Prostate gland (tissue), 2 donors: ENCODE measurements at regions of chr11 and their contacts with region 1.

Region 1: GRCh38 chr11:122215244-122215992 is 99.4 kb upstream of the BLID start:
- DNase-seq: peak; percentile 40
- H3K4me3 ChIP-seq: no peak overlapping the region
- H3K27ac ChIP-seq: peak overlapping the region in 1 of 2 donors; percentile 34
- H3K4me1 ChIP-seq: no peaks in the 10 kb centered on the region
- H3K27me3 ChIP-seq: no peaks in the 10 kb centered on the region
- CTCF ChIP-seq: peak; percentile 45 to 81 (median 73)
- POLR2A ChIP-seq: no peak

Region 2: DNA sequence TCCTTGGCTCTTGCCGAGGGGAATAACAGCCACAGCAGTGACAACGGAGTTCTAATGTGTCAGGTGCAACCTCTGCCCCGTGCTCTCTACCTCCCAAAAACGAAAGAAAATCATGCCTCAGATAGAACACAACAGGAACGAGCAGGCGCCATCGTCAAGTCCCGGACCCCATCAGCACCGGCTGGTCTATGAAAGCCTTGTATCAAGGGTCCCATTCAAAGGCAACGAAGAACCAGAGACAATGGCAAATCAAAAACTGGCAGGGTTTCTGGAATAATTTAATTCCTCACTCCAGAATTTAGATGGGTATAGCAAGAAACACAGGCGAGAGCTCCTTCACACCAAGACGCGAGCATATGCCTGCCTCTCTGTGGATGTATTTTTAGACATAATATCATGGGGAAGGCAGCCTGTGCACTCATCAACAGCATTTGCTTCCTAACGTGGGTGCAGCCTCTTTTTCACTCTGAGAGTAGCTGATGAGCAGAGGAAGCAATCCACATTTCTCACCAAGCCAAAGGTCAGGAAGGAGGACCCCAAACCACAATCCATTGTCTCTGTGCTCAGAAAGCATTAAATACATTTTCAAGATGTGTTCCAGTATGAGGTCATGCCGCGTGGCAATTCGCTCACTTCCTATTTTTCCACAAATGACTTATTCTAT is 94.0 kb after region 1 on chr11:
- intact Hi-C with region 1: loop called (anchors 10 kb)
- DNase-seq: no peak
- H3K4me3 ChIP-seq: peak overlapping the region in 1 of 2 donors; percentile 6
- H3K27ac ChIP-seq: peak overlapping the region; percentile 23 to 44
- H3K4me1 ChIP-seq: no peaks in the 10 kb centered on the region
- H3K27me3 ChIP-seq: no peaks in the 10 kb centered on the region
- CTCF ChIP-seq: no peak
- POLR2A ChIP-seq: no peak

Region 3: GRCh38 chr11:122439911-122440810 is 224.7 kb after region 1 on chr11:
- intact Hi-C with region 1: loop called (anchors 10 kb)
- DNase-seq: no peak
- H3K4me3 ChIP-seq: peak overlapping the region; percentile 23 to 24
- H3K27ac ChIP-seq: peak overlapping the region; percentile 35 to 44
- H3K4me1 ChIP-seq: no peaks in the 10 kb centered on the region
- H3K27me3 ChIP-seq: no peaks in the 10 kb centered on the region
- CTCF ChIP-seq: no peak
- POLR2A ChIP-seq: no peak